Body of pancreas (tissue), 4 donors: ENCODE measurements at regions of chr17 and their contacts with region 1.

Region 1: DNA sequence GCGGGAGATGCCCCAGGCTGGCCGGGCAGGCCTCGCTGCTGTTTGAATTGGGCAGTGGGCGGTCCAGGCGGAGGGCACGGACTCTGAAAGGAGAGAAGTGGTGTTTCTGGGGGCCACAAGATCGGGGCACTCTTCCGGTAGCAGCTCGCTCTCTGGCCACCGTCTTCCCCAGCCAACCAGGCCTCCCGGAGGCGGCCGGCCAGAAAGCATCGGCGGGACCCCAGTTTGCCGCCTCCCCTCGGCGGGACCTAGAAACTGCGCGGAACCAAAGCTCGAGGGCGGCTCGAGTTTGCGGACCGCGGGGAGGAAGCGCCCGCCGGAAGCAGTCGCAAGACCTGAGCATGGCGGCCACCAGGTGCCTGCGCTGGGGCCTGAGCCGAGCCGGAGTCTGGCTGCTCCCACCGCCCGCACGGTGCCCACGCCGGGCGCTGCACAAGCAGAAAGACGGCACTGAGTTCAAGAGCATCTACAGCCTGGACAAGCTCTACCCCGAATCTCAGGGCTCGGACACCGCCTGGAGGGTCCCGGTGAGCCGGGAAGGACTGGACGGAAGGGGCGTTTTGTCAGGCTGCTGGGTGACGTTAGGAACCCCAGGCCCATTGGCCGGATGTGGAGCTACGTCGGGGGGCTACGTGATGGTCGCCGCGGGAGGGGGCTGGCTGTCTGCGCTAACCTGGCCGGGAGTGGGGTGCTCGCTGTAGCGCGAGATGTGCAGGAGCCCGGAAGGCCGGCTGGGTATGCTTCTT is at the start of gene MRPL58:
- DNase-seq: peak; percentile 80 to 85 (median 82)
- ATAC-seq: peak; percentile 90
- H3K4me3 ChIP-seq: peak within 1 kb of the TSS; percentile 45 to 88
- H3K27ac ChIP-seq: peak within 1 kb of the TSS; percentile 77 to 92 (median 92)
- H3K4me1 ChIP-seq: peaks cover 26% of the 10 kb centered on the region
- H3K27me3 ChIP-seq: no peaks in the 10 kb centered on the region
- CTCF ChIP-seq: peak; percentile 46 to 80 (median 73)
- POLR2A ChIP-seq: peak; percentile 38 to 74 (median 68)
- total RNA-seq, gene MRPL58: 16.9 TPM in 1 of 2 donors, not detected in the other

Region 2: GRCh38 chr17:74961657-74962490 is 50.6 kb before region 1 on chr17:
- intact Hi-C with region 1: loop called (anchors 5 kb)
- DNase-seq: peak; percentile 90 to 93 (median 92)
- ATAC-seq: peak; percentile 87
- H3K4me3 ChIP-seq: no peak overlapping the region
- H3K27ac ChIP-seq: peak overlapping the region in 1 of 4 donors; percentile 14
- H3K4me1 ChIP-seq: peaks cover 17% of the 10 kb centered on the region
- H3K27me3 ChIP-seq: no peaks in the 10 kb centered on the region
- CTCF ChIP-seq: peak; percentile 68 to 84 (median 79)
- POLR2A ChIP-seq: no peak

Region 3: DNA sequence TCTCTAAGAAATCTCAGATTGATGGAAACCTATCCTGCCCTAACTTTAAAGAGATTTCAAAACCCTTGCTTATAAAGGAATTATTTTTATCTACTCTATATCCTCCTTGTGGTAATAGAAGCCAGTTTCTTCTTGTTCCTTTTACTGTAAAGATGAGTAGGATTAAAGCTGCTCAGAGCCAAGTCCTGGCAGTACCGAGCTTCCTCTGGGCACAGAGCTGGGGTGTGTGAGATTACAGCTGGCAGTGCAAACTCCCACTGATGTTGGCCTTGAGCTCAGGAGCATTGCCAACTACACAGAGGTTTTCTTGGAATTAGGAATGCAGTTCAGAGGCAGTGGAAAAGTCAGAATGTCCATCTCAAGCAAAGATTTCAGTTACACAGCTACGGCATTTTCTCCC is 36.0 kb after region 1 on chr17:
- intact Hi-C with region 1: no loop called
- DNase-seq: peak; percentile 54 to 72 (median 68)
- ATAC-seq: no peak
- H3K4me3 ChIP-seq: no peak overlapping the region
- H3K27ac ChIP-seq: peak overlapping the region in 3 of 4 donors; percentile 42 to 97 (median 93)
- H3K4me1 ChIP-seq: peaks cover 21% of the 10 kb centered on the region
- H3K27me3 ChIP-seq: no peaks in the 10 kb centered on the region
- CTCF ChIP-seq: no peak
- POLR2A ChIP-seq: no peak

Region 4: DNA sequence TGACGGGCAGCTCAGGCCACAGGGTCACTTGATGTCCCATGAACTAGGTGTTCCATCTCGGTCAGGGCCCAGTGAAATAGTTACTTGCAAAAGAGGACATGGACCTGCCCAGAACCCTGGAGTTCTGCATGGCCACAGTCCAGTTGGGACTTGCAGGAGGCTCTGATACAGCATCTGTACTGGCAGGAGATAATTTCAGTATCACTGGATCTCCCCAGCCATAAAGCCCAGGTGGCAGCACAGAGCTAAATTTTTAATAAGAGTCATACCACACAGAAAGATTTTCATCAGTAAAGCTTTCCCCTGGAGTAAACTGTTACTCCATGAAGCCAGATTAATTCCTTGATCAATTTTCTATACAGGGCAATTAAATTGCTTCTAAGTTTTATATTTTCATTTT is 57.3 kb after region 1 on chr17:
- intact Hi-C with region 1: no loop called
- DNase-seq: no peak
- ATAC-seq: no peak
- H3K4me3 ChIP-seq: no peak overlapping the region
- H3K27ac ChIP-seq: no peak overlapping the region
- H3K4me1 ChIP-seq: no peaks in the 10 kb centered on the region
- H3K27me3 ChIP-seq: no peaks in the 10 kb centered on the region
- CTCF ChIP-seq: peak in 5 of 7 experiments; percentile 21 to 42 (median 30)
- POLR2A ChIP-seq: no peak